Activated B cell treated with CpG ODN at 0.5 μM for 24 hours (primary cell): ENCODE measurements at regions of chr11 and their contacts with region 1.

Region 1: DNA sequence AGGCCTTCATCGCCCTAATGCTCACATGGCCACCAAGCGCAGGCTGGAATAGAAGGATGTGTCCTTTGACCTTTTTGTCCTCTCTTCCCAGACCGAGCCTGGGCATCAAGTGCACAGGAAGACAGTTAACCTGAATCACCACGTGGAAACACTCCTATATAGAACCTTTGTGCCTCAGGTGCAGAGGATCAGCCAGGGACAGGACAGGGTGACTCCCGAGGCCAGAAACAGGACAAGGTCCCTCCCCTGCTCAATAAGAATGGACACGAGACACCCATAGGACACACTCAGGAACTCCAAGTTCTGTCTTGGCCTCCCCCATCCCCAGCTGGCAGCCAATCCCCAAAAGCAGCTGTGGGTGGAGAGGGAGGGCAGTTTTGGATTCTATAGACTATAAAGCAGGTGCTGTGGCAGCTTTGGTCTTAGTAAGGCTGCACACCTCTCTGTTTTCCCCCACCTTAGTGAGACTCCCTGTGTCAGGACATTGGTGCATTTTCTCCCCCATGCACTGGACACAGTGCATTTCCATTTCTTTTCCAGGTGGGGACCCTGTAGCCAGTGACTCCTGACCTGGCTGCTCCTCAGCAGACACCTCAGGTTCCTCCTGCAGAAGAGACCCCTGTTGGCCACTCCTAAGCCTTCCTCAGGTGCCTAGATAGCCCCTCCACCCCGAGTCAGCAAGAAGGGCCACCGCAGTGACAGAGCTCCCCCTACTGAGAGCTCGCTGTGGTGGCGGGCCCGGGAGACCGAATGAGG is 43.6 kb upstream of the POU2AF1 start:
- DNase-seq: peak; percentile 69
- ATAC-seq: peak; percentile 76
- H3K4me3 Mint-ChIP-seq: peak overlapping the region; percentile 42
- H3K27ac Mint-ChIP-seq: peak overlapping the region; percentile 82
- H3K4me1 Mint-ChIP-seq: peaks cover 59% of the 10 kb centered on the region
- H3K27me3 Mint-ChIP-seq: no peaks in the 10 kb centered on the region
- CTCF ChIP-seq: no peak

Region 2: DNA sequence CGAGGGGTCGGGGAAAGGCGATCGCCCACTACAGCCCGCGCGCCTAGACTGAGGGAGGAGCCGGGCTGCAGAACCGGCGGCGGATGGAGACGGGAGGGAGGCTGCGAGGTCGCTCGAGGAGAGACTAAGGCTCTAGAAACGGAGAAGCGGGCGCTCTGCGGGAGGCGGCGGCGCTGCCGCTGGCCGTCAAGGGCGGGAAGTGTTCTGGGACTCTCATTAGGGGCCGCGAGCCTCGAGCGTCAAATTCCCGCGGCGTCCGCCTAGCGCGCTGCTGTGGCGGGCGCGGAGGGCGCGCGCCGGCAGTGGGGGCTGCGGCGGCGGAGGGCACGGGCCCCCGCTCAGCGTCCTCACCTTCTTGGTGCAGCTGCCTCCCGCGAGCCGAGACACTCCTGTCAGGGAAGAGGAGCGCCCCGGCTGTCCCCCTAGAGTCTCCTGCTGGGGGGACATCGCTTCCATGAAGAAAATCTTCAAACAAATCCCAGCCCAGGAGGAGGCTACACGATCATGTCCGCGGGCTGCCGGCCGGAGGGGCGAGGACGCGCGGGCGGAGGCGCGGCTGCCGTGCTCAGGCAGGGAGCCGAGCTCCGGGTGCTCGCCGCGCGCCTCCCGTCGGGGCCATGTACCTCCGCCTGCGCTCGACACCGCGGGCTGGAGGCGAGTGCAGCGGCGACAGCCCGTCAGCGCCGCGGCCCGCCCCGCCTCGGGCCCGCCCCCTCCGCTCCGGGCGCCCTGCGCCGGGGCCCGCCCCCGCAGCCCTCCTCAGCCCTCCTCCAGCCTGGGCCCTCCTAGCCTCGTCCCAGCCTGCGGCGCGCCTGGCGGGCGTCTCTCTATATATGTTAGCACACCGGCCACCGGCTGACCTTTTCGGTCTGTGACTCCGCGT is 710.7 kb before region 1 on chr11 and contains the start of gene ARHGAP20:
- CTCF ChIA-PET with region 1: no interaction called
- POLR2A ChIA-PET with region 1: no interaction called
- intact Hi-C with region 1: loop called (anchors 10 kb)
- DNase-seq: peak; percentile 71
- ATAC-seq: peak; percentile 95
- H3K4me3 Mint-ChIP-seq: peak within 1 kb of the TSS; percentile 84
- H3K27ac Mint-ChIP-seq: no peak within 1 kb of the TSS
- H3K4me1 Mint-ChIP-seq: peaks cover 21% of the 10 kb centered on the region
- H3K27me3 Mint-ChIP-seq: peaks cover 42% of the 10 kb centered on the region
- CTCF ChIP-seq: no peak
- total RNA-seq, gene ARHGAP20: 0.11 and 0.17 TPM in 2 replicates

Region 3: GRCh38 chr11:111283945-111284481 is 138.7 kb before region 1 on chr11:
- CTCF ChIA-PET with region 1: interaction called, 231 read pairs
- POLR2A ChIA-PET with region 1: interaction called, 13 read pairs
- intact Hi-C with region 1: loop called (anchors 1 kb)
- DNase-seq: no peak
- ATAC-seq: peak; percentile 67
- H3K4me3 Mint-ChIP-seq: peak overlapping the region; percentile 58
- H3K27ac Mint-ChIP-seq: no peak overlapping the region
- H3K4me1 Mint-ChIP-seq: peaks cover 13% of the 10 kb centered on the region
- H3K27me3 Mint-ChIP-seq: no peaks in the 10 kb centered on the region
- CTCF ChIP-seq: no peak

Region 4: DNA sequence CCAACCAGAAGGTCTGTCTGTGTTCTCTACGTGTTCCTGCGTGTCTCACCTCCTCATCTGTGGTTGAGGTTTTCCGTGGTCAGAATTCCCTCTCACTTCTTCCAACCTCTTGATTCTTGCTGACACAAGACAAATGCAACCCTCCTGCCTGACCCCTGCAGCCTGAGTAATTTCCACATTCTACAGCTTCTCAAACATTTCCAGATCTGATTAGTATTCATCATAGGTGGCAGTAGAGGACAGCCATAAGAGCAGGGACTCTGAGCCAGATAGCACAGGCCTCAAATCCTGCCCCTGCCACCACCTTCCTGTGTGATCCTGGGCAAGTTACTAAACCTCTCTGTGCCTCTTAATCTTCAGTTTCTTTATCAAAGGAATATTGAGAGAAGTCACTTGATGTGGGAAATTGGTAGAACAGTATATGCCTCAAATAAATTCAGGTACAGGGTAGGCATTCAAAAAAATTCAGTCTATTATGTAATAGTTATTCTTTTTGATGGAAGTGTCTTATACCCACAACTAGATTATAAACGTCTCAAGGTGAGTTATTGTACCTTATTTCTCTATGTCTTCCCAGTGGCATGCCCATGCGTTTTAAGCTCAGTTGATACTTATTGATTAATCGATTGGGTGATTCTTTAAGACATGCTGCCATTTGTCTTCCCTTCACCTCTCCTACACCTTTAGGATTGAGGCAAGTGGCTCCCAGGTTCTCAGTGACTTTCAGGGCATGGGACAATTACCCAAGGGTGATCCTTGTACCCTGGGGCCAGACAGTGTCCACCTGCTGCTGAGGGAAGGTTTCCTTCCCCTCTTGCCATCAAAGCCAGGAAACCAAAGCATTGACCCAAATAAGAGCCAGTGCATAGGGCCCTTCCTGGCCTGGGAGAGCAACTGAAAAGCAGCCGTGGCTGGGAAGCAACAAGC is 63.2 kb before region 1 on chr11:
- CTCF ChIA-PET with region 1: interaction called, 144 read pairs
- POLR2A ChIA-PET with region 1: interaction called, 30 read pairs
- intact Hi-C with region 1: loop called (anchors 1 kb)
- DNase-seq: no peak
- ATAC-seq: peak; percentile 51
- H3K4me3 Mint-ChIP-seq: no peak overlapping the region
- H3K27ac Mint-ChIP-seq: no peak overlapping the region
- H3K4me1 Mint-ChIP-seq: peaks cover 24% of the 10 kb centered on the region
- H3K27me3 Mint-ChIP-seq: no peaks in the 10 kb centered on the region
- CTCF ChIP-seq: no peak

Region 5: GRCh38 chr11:111387363-111387762 is 35.3 kb before region 1 on chr11:
- CTCF ChIA-PET with region 1: interaction called, 15 read pairs
- POLR2A ChIA-PET with region 1: interaction called, 250 read pairs
- intact Hi-C with region 1: no loop called
- DNase-seq: no peak
- ATAC-seq: no peak
- H3K4me3 Mint-ChIP-seq: no peak overlapping the region
- H3K27ac Mint-ChIP-seq: no peak overlapping the region
- H3K4me1 Mint-ChIP-seq: peaks cover 56% of the 10 kb centered on the region
- H3K27me3 Mint-ChIP-seq: no peaks in the 10 kb centered on the region
- CTCF ChIP-seq: no peak

Region 6: GRCh38 chr11:111441443-111441842 is 18.8 kb after region 1 on chr11:
- CTCF ChIA-PET with region 1: interaction called, 42 read pairs
- POLR2A ChIA-PET with region 1: interaction called, 4 read pairs
- intact Hi-C with region 1: loop called (anchors 1 kb)
- DNase-seq: no peak
- ATAC-seq: no peak
- H3K4me3 Mint-ChIP-seq: no peak overlapping the region
- H3K27ac Mint-ChIP-seq: no peak overlapping the region
- H3K4me1 Mint-ChIP-seq: peaks cover 44% of the 10 kb centered on the region
- H3K27me3 Mint-ChIP-seq: no peaks in the 10 kb centered on the region
- CTCF ChIP-seq: no peak

Region 7: DNA sequence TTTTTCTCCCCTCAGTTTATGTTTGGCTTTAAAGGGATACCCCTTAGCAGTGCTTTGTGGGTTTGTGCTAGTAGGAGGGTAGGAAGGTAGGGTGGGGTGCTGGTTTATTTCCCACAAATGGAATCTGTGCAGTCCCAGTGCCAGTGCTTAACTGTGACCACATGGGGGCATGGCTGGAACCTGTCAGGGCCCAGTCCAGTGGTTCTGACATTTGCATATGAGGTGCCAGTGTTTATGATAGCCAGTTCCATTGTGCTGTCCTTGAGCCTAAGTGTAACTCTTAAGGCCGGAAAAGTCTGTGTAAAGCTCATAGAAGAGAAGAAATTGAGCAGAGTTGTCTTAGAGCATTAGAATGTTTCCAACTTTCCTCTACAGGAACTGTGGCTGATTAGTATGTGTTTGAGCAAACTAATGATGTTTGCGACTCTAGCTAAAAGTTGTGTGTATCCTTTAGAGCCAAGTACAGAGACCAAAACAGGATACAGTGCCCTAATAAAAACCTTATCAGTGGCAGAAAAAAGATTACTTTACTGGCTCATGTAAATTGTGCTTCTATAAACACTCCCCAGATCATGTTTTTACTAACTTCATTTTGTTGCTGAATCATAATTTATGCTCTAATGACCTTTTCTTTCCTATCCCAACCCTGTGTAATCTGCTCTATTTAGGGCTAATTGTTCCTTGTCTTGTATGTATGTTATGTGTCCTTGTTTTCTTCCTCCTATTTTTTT is 552.6 kb after region 1 on chr11:
- CTCF ChIA-PET with region 1: no interaction called
- POLR2A ChIA-PET with region 1: no interaction called
- intact Hi-C with region 1: no loop called
- DNase-seq: no peak
- ATAC-seq: no peak
- H3K4me3 Mint-ChIP-seq: no peak overlapping the region
- H3K27ac Mint-ChIP-seq: no peak overlapping the region
- H3K4me1 Mint-ChIP-seq: peaks cover 17% of the 10 kb centered on the region
- H3K27me3 Mint-ChIP-seq: peaks cover 21% of the 10 kb centered on the region
- CTCF ChIP-seq: no peak